ENCODE measurements at regions of chr7 and their contacts with region 1.

Region 1: DNA sequence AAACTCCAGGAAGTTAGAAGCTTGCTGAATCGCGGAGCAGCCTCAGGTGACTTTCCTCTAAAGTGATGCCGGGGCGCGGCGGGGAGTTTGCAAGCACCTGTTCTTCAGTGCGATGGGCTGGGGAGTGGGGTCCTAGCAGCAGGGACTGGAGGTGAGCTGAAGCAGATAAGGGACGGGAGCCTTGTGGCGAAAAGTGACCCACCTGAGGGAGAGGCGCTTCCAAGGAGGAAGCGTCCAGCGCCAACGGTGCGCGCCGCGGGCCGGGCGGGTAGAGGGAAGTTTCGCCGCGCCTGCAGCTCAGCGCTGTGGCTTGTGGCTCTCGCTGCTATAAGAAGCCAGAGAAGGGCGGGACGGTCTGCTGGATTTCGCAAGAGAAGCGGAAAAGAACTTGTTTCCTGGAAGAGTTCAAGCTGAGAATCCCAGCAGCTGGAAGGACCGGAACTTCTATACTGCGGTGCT is at the start of gene STEAP4:
- DNase-seq: peak; percentile 78 to 89
- H3K4me3 ChIP-seq: peak within 1 kb of the TSS; percentile 58
- H3K27ac ChIP-seq: peak within 1 kb of the TSS; percentile 37
- H3K4me1 ChIP-seq: peaks cover 16% of the 10 kb centered on the region
- H3K27me3 ChIP-seq: no peaks in the 10 kb centered on the region
- CTCF ChIP-seq: no peak
- total RNA-seq, gene STEAP4: 10.3 and 12.1 TPM in 2 replicates

Region 2: DNA sequence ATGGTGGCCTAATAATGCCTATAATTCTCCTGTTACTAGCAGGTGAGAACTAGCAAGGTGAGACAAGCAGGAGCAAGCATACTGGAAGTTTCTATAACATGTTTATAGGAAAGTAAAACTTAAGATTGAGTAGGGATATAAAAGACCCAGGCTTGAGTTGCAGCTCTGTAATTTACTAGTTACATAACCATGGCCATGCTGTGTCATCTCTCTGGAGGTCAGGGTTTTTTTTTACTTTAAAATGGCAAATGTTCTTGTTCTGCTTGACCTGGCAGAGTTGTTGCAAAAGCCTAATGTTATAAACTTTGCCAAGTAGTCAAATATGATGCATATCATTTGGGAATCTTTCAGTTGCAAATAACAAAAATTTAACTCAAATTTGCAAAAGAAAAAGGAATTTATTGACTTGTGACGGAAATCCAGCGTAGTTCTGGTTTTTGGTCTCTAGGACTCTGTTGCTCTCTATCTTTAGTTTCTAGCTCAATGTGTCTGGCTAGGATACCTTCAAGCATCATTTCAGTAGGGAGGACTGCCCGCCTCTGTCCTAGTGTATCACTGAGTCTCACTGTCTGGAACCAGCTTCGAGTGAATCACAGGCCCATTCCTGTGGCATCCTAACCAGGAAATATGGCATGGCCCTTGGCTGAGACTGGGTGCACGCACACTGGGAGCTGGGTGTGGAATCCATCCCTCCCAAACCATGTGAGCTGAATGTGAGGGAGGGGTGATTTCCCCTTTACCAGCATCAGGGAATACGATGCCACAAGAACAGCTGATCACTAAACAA is 304.7 kb before region 1 on chr7:
- CTCF ChIA-PET with region 1: no interaction called
- POLR2A ChIA-PET with region 1: no interaction called
- intact Hi-C with region 1: no loop called
- DNase-seq: no peak
- H3K4me3 ChIP-seq: no peak overlapping the region
- H3K27ac ChIP-seq: no peak overlapping the region
- H3K4me1 ChIP-seq: no peaks in the 10 kb centered on the region
- H3K27me3 ChIP-seq: no peaks in the 10 kb centered on the region
- CTCF ChIP-seq: no peak

Region 3: GRCh38 chr7:88254716-88255115 is 51.9 kb before region 1 on chr7:
- CTCF ChIA-PET with region 1: no interaction called
- POLR2A ChIA-PET with region 1: interaction called, 3 read pairs
- intact Hi-C with region 1: loop called (anchors 5 kb)
- DNase-seq: peak; percentile 89 to 95
- H3K4me3 ChIP-seq: peak overlapping the region; percentile 23; the same call in 1 of the 2 replicates
- H3K27ac ChIP-seq: peak overlapping the region; percentile 88
- H3K4me1 ChIP-seq: peaks cover 56% of the 10 kb centered on the region
- H3K27me3 ChIP-seq: no peaks in the 10 kb centered on the region
- CTCF ChIP-seq: no peak

Region 4: GRCh38 chr7:88357781-88358525 is 51.3 kb after region 1 on chr7:
- CTCF ChIA-PET with region 1: no interaction called
- POLR2A ChIA-PET with region 1: interaction called, 3 read pairs
- intact Hi-C with region 1: loop called (anchors 5 kb)
- DNase-seq: no peak
- H3K4me3 ChIP-seq: no peak overlapping the region
- H3K27ac ChIP-seq: no peak overlapping the region
- H3K4me1 ChIP-seq: peaks cover 15% of the 10 kb centered on the region
- H3K27me3 ChIP-seq: no peaks in the 10 kb centered on the region
- CTCF ChIP-seq: peak; percentile 70

Region 5: GRCh38 chr7:88368686-88369085 is 62.1 kb after region 1 on chr7:
- CTCF ChIA-PET with region 1: no interaction called
- POLR2A ChIA-PET with region 1: no interaction called
- intact Hi-C with region 1: no loop called
- DNase-seq: no peak
- H3K4me3 ChIP-seq: no peak overlapping the region
- H3K27ac ChIP-seq: no peak overlapping the region
- H3K4me1 ChIP-seq: no peaks in the 10 kb centered on the region
- H3K27me3 ChIP-seq: no peaks in the 10 kb centered on the region
- CTCF ChIP-seq: no peak

Region 6: GRCh38 chr7:88455696-88456095 is 149.1 kb after region 1 on chr7:
- CTCF ChIA-PET with region 1: no interaction called
- POLR2A ChIA-PET with region 1: no interaction called
- intact Hi-C with region 1: loop called (anchors 5 kb)
- DNase-seq: peak; percentile 15 to 66
- H3K4me3 ChIP-seq: no peak overlapping the region
- H3K27ac ChIP-seq: peak overlapping the region; percentile 54
- H3K4me1 ChIP-seq: peaks cover 13% of the 10 kb centered on the region
- H3K27me3 ChIP-seq: no peaks in the 10 kb centered on the region
- CTCF ChIP-seq: no peak

Measured in PC-9 (cell line).